HEK293 (cell line): ENCODE measurements at regions of chr9 and their contacts with region 1.

Region 1: DNA sequence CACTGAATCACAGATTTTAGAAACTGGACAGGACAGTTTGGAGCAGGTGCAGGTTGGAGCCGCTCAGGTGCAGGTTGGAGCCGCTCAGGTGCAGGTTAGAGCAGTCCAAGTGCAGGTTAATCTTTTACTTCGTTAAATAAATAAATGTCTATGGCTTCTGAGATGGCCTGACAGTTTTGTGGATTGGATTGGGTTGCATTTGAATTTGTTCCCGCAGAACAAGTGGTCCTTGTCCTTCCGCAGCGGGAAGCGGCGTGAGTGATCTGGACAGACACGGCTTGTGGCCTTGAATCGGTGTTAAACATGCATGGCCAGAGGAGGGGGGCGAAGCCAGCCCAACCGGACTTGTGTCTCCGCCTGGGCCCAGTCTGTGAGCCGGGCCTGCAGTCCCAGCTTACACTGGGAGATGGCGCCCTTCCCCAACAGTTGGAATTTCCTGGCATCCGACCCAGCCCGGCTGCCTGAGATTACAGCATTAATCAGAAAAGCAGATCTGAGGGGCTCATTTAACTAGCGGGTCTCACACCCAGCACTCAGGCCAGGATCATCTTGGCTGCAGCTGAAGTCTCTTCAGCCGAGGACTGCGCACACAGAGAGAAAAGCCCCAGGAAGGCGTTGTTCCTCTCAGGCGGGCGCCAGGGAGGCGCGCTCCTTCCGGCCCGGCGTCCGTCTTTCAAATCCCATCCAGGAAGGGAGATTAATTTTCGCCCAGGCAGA is 1.5 kb upstream of the OLFM1 start:
- H3K4me3 ChIP-seq: no peak overlapping the region
- H3K27ac ChIP-seq: no peak overlapping the region
- H3K4me1 ChIP-seq: no peaks in the 10 kb centered on the region
- CTCF ChIP-seq: peak; percentile 89

Region 2: GRCh38 chr9:134793288-134794188 is 292.4 kb before region 1 on chr9:
- CTCF ChIA-PET with region 1: no interaction called
- POLR2A ChIA-PET with region 1: no interaction called
- H3K4me3 ChIP-seq: no peak overlapping the region
- H3K27ac ChIP-seq: no peak overlapping the region
- H3K4me1 ChIP-seq: no peaks in the 10 kb centered on the region
- CTCF ChIP-seq: no peak

Region 3: DNA sequence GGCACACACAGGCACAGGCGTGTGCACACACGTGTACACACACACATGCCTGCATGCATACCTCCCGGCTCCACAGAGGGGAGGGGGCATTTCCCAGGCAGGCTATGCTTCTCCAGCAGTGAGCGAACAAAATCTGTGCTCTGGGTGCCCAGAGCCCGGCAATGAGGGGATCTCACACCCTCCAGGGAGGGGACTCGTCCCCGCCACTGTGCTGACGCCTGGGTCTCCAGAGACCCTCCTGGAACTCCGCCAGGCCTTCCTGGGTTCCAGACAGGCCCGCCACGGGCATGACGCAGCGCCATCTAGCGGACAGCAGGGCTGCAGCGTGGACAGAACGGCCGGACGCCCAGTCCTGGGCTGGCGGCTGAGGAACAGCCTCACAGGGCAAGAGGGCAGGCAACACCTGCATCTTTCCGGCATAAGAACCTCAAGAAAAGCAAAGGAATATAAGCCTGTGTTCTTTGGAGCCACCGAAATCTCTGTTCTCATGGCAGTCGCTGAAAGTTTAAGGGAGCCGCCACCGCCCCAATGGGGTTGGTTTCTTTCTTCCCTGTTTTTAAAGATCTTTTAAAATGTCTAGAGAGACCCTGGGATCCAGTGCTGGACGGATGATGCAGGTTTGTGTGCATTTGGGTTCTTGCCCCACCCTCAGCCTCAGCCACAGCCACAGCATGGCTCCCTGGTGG is 258.0 kb after region 1 on chr9:
- CTCF ChIA-PET with region 1: interaction called, 14 read pairs
- POLR2A ChIA-PET with region 1: no interaction called
- H3K4me3 ChIP-seq: no peak overlapping the region
- H3K27ac ChIP-seq: no peak overlapping the region
- H3K4me1 ChIP-seq: no peaks in the 10 kb centered on the region
- CTCF ChIP-seq: peak; percentile 90

Region 4: GRCh38 chr9:135416664-135417290 is 330.8 kb after region 1 on chr9:
- CTCF ChIA-PET with region 1: interaction called, 110 read pairs
- POLR2A ChIA-PET with region 1: no interaction called
- H3K4me3 ChIP-seq: no peak overlapping the region
- H3K27ac ChIP-seq: no peak overlapping the region
- H3K4me1 ChIP-seq: no peaks in the 10 kb centered on the region
- CTCF ChIP-seq: no peak